Spleen (tissue), 13 donors: ENCODE measurements at regions of chr4 and their contacts with region 1.

Region 1: GRCh38 chr4:44629280-44629866 is 22.1 kb downstream of the YIPF7 start:
- DNase-seq: no peak
- H3K4me3 ChIP-seq: no peak overlapping the region
- H3K27ac ChIP-seq: no peak overlapping the region
- H3K4me1 ChIP-seq: no peaks in the 10 kb centered on the region
- H3K27me3 ChIP-seq: peaks cover 0 to 4% (median 0%) of the 10 kb centered on the region in 7 donors
- CTCF ChIP-seq: peak in 9 of 11 experiments; percentile 21 to 70 (median 59)
- POLR2A ChIP-seq: no peak

Region 2: GRCh38 chr4:43132010-43132582 is 1497.3 kb before region 1 on chr4:
- intact Hi-C with region 1: loop called (anchors 5 kb)
- DNase-seq: peak; percentile 76
- H3K4me3 ChIP-seq: no peak overlapping the region
- H3K27ac ChIP-seq: no peak overlapping the region
- H3K4me1 ChIP-seq: no peaks in the 10 kb centered on the region
- H3K27me3 ChIP-seq: no peaks in the 10 kb centered on the region
- CTCF ChIP-seq: peak in 10 of 11 experiments; percentile 28 to 71 (median 52)
- POLR2A ChIP-seq: no peak

Region 3: GRCh38 chr4:44532851-44533250 is 96.5 kb before region 1 on chr4:
- intact Hi-C with region 1: no loop called
- DNase-seq: no peak
- H3K4me3 ChIP-seq: no peak overlapping the region
- H3K27ac ChIP-seq: no peak overlapping the region
- H3K4me1 ChIP-seq: no peaks in the 10 kb centered on the region
- H3K27me3 ChIP-seq: no peaks in the 10 kb centered on the region
- CTCF ChIP-seq: no peak
- POLR2A ChIP-seq: no peak

Region 4: DNA sequence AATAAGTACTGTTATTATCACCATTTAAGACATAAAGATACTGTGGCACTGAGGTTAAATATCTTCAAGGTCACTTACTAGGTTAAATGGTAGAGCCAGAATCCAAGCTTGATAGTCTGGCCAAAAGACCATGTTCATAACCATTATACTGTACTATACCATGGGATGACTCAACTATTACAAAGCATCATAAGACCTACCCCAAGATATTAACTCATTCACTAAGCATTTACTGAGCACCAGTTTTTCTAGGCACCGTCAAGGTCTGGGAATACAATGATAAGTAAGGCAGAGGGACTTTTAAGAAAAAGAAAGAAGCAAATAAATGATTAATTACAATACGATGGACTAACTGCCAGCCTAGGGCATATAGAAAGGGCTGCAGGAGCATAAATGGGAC is 85.2 kb before region 1 on chr4:
- intact Hi-C with region 1: no loop called
- DNase-seq: no peak
- H3K4me3 ChIP-seq: no peak overlapping the region
- H3K27ac ChIP-seq: no peak overlapping the region
- H3K4me1 ChIP-seq: no peaks in the 10 kb centered on the region
- H3K27me3 ChIP-seq: no peaks in the 10 kb centered on the region
- CTCF ChIP-seq: no peak
- POLR2A ChIP-seq: no peak

Region 5: GRCh38 chr4:44558031-44558605 is 71.3 kb before region 1 on chr4:
- intact Hi-C with region 1: no loop called
- DNase-seq: no peak
- H3K4me3 ChIP-seq: no peak overlapping the region
- H3K27ac ChIP-seq: no peak overlapping the region
- H3K4me1 ChIP-seq: no peaks in the 10 kb centered on the region
- H3K27me3 ChIP-seq: no peaks in the 10 kb centered on the region
- CTCF ChIP-seq: no peak
- POLR2A ChIP-seq: no peak